GM13977 (cell line): ENCODE measurements at regions of chr9 and their contacts with region 1.

Region 1: DNA sequence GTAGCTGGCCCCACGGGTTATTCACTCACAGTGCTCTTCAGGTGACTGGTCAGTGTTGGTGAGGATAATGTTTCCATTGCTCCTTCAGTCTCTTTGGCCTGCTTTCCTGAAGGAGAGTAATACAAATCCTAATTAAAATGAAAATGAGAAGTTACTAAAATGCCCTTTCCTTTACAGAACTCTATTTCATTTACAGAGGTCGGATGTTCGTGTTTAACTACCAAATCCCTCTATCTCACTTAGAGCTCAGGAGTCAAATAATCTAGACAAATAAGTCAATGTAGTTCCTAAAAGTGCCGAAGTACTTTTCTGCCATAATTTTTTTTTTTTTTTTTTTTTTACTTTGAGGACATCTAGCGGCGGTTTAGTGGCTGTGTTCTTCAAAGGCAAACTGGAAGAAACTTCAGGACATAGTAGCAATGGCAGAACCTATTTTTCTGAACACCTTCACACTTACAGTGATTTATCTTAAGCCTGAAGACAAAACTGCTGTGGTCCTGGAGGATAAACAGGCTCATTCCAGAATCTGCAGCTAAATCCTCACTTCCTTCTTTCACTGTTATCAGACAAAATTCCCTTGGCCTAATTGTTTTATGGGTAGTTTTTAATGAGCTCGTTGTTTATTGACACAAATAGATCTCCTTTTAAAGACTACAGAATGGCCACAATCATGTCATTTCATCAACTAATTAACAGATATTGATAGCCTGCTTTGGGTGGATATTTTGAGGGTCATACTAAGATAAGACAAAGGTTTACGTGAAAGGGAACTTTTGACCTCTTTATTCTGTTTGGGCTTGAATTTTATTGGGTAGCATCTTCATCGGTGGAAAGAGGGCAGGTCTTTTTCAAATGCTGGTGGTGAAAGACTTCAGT is 207.6 kb upstream of the DMRTA1 start:
- DNase-seq: no peak
- CTCF ChIP-seq: peak; percentile 43

Region 2: GRCh38 chr9:21812946-21813568 is 426.0 kb before region 1 on chr9:
- in situ Hi-C with region 1: loop called (anchors 10 kb)
- DNase-seq: peak; percentile 52
- CTCF ChIP-seq: peak; percentile 93